Naive thymus-derived CD4-positive, alpha-beta T cell (primary cell): ENCODE measurements at regions of chr2 and their contacts with region 1.

Region 1: GRCh38 chr2:650343-651310 is 26.6 kb downstream of the TMEM18 start:
- DNase-seq: no peak
- ATAC-seq: peak; percentile 12
- H3K4me3 ChIP-seq: no peak overlapping the region
- H3K4me3 Mint-ChIP-seq: no peak overlapping the region
- H3K27ac ChIP-seq: no peak overlapping the region
- H3K27ac Mint-ChIP-seq: no peak overlapping the region
- H3K4me1 ChIP-seq: no peaks in the 10 kb centered on the region
- H3K4me1 Mint-ChIP-seq: peaks cover 3 to 27% (median 21%) of the 10 kb centered on the region in 7 donors
- H3K27me3 ChIP-seq: no peaks in the 10 kb centered on the region
- H3K27me3 Mint-ChIP-seq: peaks cover 0 to 10% (median 5%) of the 10 kb centered on the region in 5 donors

Region 2: DNA sequence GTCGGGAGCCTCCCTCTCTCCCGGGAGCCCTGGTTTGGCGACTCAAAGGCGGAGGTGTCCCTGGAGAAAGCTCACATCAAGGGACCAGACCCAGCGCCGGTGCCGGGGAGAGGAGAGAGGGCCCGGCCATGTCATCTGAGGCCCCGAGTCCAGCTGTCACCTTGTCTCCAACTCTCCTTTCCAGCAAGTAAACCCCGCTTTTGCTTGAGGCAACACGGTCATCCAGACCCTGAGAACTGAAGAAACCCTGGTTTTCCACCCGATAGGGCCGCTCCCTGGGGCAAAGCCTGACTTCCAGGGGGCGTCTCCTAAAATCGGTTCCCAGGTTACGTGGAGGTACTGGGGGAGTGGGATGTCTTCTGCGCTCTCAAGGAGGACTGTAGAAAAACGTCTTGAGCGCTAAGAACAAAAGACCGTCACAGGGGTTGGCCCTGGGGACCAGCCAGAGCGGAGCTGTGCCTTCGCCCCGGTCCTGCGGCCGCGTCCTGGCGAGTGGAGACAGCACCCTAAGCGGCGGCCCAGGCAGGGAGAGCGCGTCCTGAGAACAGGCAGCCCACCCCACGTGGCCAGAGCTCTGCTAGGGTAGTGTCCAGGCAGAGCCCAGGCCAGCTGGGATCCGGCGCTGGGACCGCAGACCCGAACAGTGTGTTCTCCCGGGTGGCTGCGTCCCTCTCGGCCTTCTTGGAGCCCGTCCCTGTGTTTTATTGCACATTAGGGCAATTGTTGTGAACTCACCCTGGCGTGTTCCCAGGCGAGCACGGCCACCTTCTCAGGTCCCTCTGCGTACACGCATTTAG is 29.1 kb before region 1 on chr2:
- CTCF ChIA-PET with region 1: no interaction called
- POLR2A ChIA-PET with region 1: no interaction called
- intact Hi-C with region 1: loop called in 1 of 2 experiments (anchors 1 kb)
- DNase-seq: peak in 1 of 9 donors; percentile 13
- ATAC-seq: no peak
- H3K4me3 ChIP-seq: no peak overlapping the region
- H3K4me3 Mint-ChIP-seq: no peak overlapping the region
- H3K27ac ChIP-seq: no peak overlapping the region
- H3K27ac Mint-ChIP-seq: no peak overlapping the region
- H3K4me1 ChIP-seq: no peaks in the 10 kb centered on the region
- H3K4me1 Mint-ChIP-seq: no peaks in the 10 kb centered on the region
- H3K27me3 ChIP-seq: no peaks in the 10 kb centered on the region
- H3K27me3 Mint-ChIP-seq: peaks cover 0 to 4% (median 0%) of the 10 kb centered on the region in 5 donors

Region 3: DNA sequence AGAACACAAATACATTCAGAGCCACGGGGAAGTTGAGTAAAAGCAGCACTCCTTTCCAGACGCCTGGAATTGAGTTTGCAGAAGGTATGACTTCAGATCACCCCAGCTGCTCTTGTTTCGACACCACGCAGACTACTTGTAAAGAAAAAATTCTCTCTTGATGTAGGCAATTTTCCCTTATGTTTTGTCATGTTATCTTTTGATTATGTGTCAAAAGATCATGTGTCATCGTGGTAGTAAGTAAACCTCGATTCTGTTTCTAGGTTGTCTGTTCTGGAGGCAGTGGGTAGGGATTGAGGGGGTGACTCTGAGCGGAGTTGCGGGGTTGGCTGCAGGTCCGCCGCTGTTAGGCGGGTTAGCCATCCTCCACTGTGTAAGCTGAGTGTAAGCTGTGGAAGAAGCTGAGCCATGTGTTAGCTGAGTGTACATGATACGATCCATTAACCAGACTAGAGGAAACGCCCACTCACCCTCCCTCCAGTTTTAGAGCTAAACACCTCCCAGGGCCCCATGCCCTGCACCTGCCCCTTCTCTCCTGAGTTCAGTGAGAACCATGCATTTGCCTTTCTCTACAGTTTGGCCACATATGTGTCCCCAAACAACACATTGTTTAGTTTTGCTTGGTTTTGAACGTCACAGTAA is 481.8 kb after region 1 on chr2:
- CTCF ChIA-PET with region 1: no interaction called
- POLR2A ChIA-PET with region 1: no interaction called
- intact Hi-C with region 1: no loop called
- DNase-seq: no peak
- ATAC-seq: no peak
- H3K4me3 ChIP-seq: no peak overlapping the region
- H3K4me3 Mint-ChIP-seq: peak overlapping the region in 4 of 10 donors; percentile 19 to 22 (median 21)
- H3K27ac ChIP-seq: no peak overlapping the region
- H3K27ac Mint-ChIP-seq: no peak overlapping the region
- H3K4me1 ChIP-seq: peaks cover 0 to 4% of the 10 kb centered on the region in 2 donors
- H3K4me1 Mint-ChIP-seq: peaks cover 8 to 40% (median 33%) of the 10 kb centered on the region in 7 donors
- H3K27me3 ChIP-seq: no peaks in the 10 kb centered on the region
- H3K27me3 Mint-ChIP-seq: peaks cover 0 to 4% (median 0%) of the 10 kb centered on the region in 5 donors